HepG2 (cell line): ENCODE measurements at regions of chr3 and their contacts with region 1.

Region 1: DNA sequence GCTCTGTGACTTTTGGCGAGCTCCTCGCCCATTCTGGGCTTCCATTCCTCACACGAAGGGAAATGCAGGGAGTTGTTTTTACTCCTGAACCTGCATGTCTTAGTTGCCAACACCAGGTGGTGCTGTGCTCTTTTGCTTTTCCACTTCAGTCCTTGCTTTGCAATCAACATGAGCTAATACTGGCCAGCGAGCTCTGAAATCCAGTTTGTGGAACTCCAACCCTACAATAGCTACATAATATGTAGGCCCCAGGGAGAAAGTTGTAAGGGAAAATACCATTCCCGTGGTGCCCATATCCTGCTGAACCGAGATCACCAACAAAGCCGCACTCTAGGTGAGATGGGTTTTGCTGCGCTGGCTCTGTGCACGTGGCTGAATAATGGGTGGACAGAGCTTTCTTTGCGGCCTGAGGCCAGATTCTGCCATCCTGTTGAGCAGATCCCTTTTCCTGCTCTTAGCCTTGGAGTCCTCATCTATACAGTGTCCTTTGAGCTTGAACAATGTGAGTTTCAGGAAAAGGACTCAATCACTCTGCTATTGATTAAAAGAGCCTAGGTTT is 25.0 kb downstream of the LSM3 start:
- DNase-seq: peak; percentile 64
- ATAC-seq: peak; percentile 76
- H3K4me3 ChIP-seq: peak overlapping the region in 2 of 3 experiments; percentile 6 to 51; a peak in 2 of 6 replicates
- H3K27ac ChIP-seq: no peak overlapping the region
- H3K4me1 ChIP-seq: peaks cover 41% of the 10 kb centered on the region
- H3K27me3 ChIP-seq: no peaks in the 10 kb centered on the region
- CTCF ChIP-seq: peak; percentile 92
- EP300 ChIP-seq: no peak
- POLR2A ChIP-seq: no peak
- RAD21 ChIP-seq: peak; percentile 79

Region 2: DNA sequence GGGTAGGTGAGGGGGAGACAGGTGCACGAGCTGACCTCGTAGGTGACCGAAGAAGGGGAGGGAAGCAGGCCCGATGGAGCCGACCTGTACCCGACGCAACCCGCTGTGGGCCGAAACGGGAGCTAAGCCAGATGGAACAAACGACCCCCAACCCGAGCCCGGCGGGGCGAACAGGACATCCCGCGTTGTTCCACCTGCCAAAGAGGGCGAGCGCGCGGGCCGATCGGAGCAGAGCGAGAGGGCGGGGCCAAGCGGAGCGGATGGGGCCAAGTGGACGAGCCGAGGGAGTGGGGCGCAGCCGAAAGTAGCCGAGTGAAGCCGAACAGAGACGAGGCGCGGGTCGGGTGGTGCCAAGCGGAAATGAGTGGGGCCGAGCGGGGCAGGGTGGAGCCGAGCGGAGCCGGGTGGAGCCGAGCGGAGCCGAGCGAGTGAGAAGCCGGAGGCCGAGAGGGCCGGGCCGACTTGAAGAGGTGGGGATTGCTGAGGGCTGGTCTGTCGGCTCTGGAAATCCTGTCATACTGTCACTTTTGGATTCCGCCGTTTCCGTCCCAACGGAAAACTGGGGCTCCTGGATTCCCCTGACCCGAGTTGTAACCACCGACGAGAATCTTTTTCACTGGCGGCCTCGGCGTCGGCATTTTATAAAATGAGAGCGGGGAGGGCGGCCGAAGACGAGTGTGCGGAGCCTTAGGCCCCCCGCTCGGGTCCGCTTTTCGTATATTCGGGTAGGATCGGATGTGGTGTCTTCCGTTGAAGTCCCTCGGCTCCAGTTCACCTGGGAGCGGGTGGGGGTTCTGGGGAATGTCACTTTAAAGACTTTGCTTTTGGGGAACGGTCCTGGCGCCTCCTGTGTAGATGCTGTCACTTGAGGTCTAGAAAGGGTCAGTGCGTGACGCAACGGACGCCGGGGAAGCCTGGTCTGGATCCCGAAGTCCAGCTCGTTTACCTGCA is 308.2 kb before region 1 on chr3:
- CTCF ChIA-PET with region 1: interaction called, 4 read pairs
- POLR2A ChIA-PET with region 1: no interaction called
- in situ Hi-C with region 1: loop called (anchors 10 kb)
- intact Hi-C with region 1: loop called (anchors 5 kb)
- DNase-seq: peak; percentile 69
- ATAC-seq: peak; percentile 98
- H3K4me3 ChIP-seq: peak overlapping the region; percentile 20 to 72 (median 57)
- H3K27ac ChIP-seq: no peak overlapping the region
- H3K4me1 ChIP-seq: peaks cover 10% of the 10 kb centered on the region
- H3K27me3 ChIP-seq: peaks cover 0 to 25% of the 10 kb centered on the region in 2 experiments; a peak in 3 of 5 replicates
- CTCF ChIP-seq: no peak
- EP300 ChIP-seq: no peak
- POLR2A ChIP-seq: no peak
- RAD21 ChIP-seq: no peak

Region 3: DNA sequence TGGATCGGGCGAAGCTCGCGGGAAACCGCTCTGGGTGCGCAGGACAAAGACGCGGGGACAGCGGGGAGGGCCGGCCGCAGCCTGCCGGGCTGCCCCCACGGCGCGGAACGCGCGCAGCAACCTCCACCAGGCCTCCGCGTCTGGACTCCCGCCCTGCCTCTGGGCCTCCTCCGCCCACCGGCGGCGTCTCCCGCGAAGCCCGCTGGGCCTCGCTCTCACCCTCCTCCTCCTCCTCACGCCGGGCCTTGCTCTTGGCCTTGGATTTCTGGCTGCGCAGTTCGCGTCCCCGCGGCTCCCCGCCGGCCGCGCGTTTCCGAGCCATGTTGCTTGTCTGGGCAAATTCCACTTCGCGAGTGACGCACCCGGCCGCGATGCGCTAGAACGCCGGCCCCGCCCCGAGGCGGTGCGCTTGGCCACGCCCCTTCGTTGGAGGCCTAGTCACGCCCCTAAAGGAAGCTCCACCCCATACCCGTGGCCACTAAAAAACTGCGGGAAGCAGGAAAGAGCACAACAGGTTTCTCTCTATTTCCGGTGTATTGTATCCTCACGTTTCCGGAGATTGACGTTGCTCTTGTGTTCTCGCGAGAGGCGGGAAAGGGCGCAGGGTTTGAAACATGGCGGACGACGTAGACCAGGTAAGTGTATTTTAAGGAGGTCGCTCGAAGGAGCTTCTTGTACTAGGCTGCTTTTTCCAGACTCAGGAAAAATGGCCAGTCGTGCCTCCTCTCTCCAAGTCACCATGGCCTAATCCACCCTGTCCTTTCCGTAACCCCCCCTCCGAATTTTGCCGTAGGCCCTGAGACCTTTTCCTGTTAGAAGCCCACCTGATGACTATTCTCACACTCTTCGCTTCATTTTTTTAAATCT is 25.1 kb before region 1 on chr3 and contains the starts of genes LSM3 and XPC:
- CTCF ChIA-PET with region 1: no interaction called
- POLR2A ChIA-PET with region 1: interaction called, 33 read pairs
- in situ Hi-C with region 1: no loop called
- intact Hi-C with region 1: no loop called
- DNase-seq: peak; percentile 98
- ATAC-seq: peak; percentile 96
- H3K4me3 ChIP-seq: peak within 1 kb of the TSS; percentile 88 to 95 (median 95)
- H3K27ac ChIP-seq: peak within 1 kb of the TSS; percentile 91
- H3K4me1 ChIP-seq: peaks cover 67% of the 10 kb centered on the region
- H3K27me3 ChIP-seq: no peaks in the 10 kb centered on the region; a peak in 1 of 5 replicates
- CTCF ChIP-seq: no peak
- EP300 ChIP-seq: no peak; a peak in 1 of 4 replicates
- POLR2A ChIP-seq: peak; percentile 83 to 91
- RAD21 ChIP-seq: peak; percentile 17; the same call in 1 of the 2 replicates
- total RNA-seq, gene LSM3: 19.4 and 28.7 TPM in 2 replicates
- total RNA-seq, gene XPC: 19.2 and 24.1 TPM in 2 replicates

Region 4: DNA sequence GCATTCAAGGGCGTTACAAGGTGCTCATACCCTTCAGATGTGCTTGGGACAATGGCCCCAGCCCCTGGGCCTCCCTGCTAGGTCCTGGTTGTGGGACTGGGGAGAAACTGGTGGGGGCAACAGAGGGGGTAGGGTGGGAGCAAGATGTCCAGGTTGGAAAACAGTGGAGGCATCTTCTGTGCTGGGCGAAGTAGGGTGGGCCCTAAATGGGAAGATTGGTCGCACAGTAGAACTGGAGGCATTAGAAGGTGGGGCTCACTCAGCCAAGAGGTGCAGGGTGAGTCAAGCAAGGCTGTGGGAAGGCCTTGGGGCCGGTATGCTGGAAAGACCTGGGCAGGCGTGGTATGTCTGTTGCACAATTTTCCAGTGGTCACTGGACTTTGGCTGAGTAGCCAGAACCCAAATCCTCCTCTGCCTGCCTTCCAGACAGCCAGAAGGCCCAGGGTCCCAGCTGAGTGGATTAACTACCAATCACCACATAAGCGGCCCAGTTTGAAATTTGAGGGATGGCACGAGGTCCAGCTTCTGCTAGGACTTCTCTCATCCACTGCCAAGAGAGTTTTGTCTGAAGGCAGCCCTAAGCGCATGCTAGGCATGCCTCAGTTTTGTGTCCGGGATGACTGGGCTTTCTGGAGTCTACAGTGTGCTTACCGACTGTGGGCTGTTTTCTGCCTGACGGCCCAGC is 49.6 kb after region 1 on chr3:
- CTCF ChIA-PET with region 1: no interaction called
- POLR2A ChIA-PET with region 1: no interaction called
- in situ Hi-C with region 1: no loop called
- intact Hi-C with region 1: loop called (anchors 2 kb)
- DNase-seq: peak; percentile 55
- ATAC-seq: peak; percentile 84
- H3K4me3 ChIP-seq: no peak overlapping the region
- H3K27ac ChIP-seq: no peak overlapping the region
- H3K4me1 ChIP-seq: peaks cover 58% of the 10 kb centered on the region
- H3K27me3 ChIP-seq: no peaks in the 10 kb centered on the region; a peak in 2 of 5 replicates
- CTCF ChIP-seq: no peak
- EP300 ChIP-seq: no peak
- POLR2A ChIP-seq: no peak
- RAD21 ChIP-seq: no peak

Region 5: DNA sequence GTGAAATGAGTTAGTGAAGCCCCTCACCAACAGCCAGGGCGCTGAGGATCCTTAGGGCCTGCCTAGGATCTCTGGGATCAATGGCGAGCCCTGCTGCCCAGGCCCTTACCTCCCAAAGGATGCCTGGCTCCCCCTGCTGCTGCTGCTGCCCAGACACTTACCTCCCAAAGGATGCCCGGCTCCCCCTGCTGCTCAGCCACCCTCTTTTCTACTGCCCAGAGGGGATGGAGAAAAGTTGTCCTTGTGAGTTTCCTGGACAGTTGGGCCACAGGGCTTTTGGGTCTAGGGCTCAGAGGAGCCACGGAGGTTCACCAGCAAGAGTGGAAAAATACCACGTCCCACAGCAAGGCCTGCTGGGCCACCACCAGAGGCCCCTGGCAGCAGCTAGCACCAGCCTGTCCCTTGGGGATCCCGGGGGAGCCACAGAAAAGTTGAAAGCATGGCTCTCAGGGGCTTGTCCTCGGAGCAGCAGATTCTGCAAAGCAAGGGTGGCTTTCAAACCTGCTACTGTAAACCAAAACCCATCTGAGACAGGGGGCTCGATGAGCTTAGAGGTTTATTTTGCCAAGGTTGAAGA is 258.2 kb after region 1 on chr3:
- CTCF ChIA-PET with region 1: no interaction called
- POLR2A ChIA-PET with region 1: no interaction called
- in situ Hi-C with region 1: loop called (anchors 10 kb)
- intact Hi-C with region 1: no loop called
- DNase-seq: peak; percentile 50
- ATAC-seq: peak; percentile 92
- H3K4me3 ChIP-seq: no peak overlapping the region
- H3K27ac ChIP-seq: no peak overlapping the region
- H3K4me1 ChIP-seq: no peaks in the 10 kb centered on the region
- H3K27me3 ChIP-seq: no peaks in the 10 kb centered on the region
- CTCF ChIP-seq: peak; percentile 87
- EP300 ChIP-seq: no peak
- POLR2A ChIP-seq: no peak
- RAD21 ChIP-seq: peak; percentile 94

Region 6: DNA sequence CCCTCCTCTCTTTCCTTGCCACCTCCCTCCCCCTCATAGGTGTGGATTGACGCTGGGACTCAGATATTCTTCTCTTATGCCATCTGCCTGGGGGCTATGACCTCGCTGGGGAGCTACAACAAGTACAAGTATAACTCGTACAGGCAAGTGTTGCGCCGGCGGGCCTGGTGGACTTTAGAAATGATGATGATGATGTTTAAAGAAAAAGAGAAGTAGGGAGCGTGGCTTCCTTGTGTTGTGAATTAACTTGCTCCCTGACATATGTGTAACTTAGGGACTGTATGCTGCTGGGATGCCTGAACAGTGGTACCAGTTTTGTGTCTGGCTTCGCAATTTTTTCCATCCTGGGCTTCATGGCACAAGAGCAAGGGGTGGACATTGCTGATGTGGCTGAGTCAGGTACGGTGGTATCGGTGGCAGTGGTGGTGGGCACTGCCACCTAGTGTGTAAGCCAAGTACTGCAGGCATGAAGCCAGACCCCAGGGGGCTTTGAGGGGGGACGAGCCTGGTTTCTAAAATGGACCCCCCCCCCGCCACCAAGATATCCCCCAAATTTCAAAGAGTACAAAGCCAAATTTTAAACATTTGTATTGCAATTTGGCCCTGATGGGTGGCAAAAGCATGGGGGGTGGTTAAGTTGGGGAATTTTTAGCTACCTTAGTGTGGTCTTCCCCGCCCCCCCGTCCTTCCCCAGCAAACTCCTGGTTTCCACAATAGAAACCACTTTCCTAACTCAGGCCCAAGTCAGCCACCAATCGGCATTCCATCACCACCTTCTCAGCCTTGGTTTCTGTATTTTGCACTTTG is 264.4 kb after region 1 on chr3:
- CTCF ChIA-PET with region 1: interaction called, 11 read pairs
- POLR2A ChIA-PET with region 1: no interaction called
- in situ Hi-C with region 1: loop called (anchors 10 kb)
- intact Hi-C with region 1: no loop called
- DNase-seq: peak; percentile 8
- ATAC-seq: peak; percentile 73
- H3K4me3 ChIP-seq: no peak overlapping the region
- H3K27ac ChIP-seq: no peak overlapping the region
- H3K4me1 ChIP-seq: no peaks in the 10 kb centered on the region
- H3K27me3 ChIP-seq: no peaks in the 10 kb centered on the region
- CTCF ChIP-seq: peak; percentile 87
- EP300 ChIP-seq: no peak
- POLR2A ChIP-seq: no peak
- RAD21 ChIP-seq: peak; percentile 87